WTC11 (cell line): ENCODE measurements at regions of chrX and their contacts with region 1.

Region 1: GRCh38 chrX:69493193-69493592 is 10.9 kb upstream of the NALF2 start:
- DNase-seq: peak; percentile 64
- ATAC-seq: peak; percentile 97
- H3K4me3 Mint-ChIP-seq: no peak overlapping the region
- H3K27ac Mint-ChIP-seq: no peak overlapping the region
- H3K4me1 Mint-ChIP-seq: no peaks in the 10 kb centered on the region
- H3K27me3 Mint-ChIP-seq: peaks cover 13% of the 10 kb centered on the region
- CTCF ChIP-seq: peak; percentile 48

Region 2: DNA sequence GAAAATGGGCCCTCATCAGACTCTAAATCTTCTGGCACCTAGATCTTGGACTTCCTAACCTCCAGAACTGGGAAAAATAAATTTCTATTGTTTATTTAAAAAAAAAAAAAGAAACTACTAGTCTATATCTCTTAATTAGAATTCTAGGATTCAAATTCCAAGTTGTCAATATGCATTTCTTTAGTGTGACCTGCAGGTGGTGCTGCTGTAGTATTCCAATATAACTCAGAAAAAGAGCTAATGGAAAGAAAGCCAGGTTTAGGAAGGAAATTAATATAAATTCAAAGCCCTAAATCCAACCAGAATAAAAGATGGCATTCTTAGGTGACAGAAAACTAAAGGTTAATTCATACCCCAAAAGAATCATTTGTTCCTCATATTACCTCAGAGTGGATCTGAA is 69.0 kb before region 1 on chrX:
- CTCF ChIA-PET with region 1: interaction called, 18 read pairs
- POLR2A ChIA-PET with region 1: no interaction called
- DNase-seq: no peak
- ATAC-seq: no peak
- H3K4me3 Mint-ChIP-seq: no peak overlapping the region
- H3K27ac Mint-ChIP-seq: no peak overlapping the region
- H3K4me1 Mint-ChIP-seq: 0 out of 2 replicates have a peak, but pooled peaks cover 5% of the 10 kb centered on the region
- H3K27me3 Mint-ChIP-seq: no peaks in the 10 kb centered on the region; the same call in 1 of the 2 replicates
- CTCF ChIP-seq: no peak

Region 3: GRCh38 chrX:69884210-69884609 is 391.0 kb after region 1 on chrX:
- CTCF ChIA-PET with region 1: no interaction called
- POLR2A ChIA-PET with region 1: no interaction called
- DNase-seq: no peak
- ATAC-seq: no peak
- H3K4me3 Mint-ChIP-seq: no peak overlapping the region
- H3K27ac Mint-ChIP-seq: no peak overlapping the region
- H3K4me1 Mint-ChIP-seq: 0 out of 2 replicates have a peak, but pooled peaks cover 1% of the 10 kb centered on the region
- H3K27me3 Mint-ChIP-seq: no peaks in the 10 kb centered on the region
- CTCF ChIP-seq: no peak

Region 4: GRCh38 chrX:70030301-70030767 is 537.1 kb after region 1 on chrX:
- CTCF ChIA-PET with region 1: interaction called, 10 read pairs
- POLR2A ChIA-PET with region 1: no interaction called
- DNase-seq: peak; percentile 49
- ATAC-seq: peak; percentile 54; the same call in 1 of the 2 replicates
- H3K4me3 Mint-ChIP-seq: no peak overlapping the region
- H3K27ac Mint-ChIP-seq: no peak overlapping the region
- H3K4me1 Mint-ChIP-seq: peaks cover 23% of the 10 kb centered on the region
- H3K27me3 Mint-ChIP-seq: no peaks in the 10 kb centered on the region; the same call in 1 of the 2 replicates
- CTCF ChIP-seq: peak; percentile 63